Naive thymus-derived CD4-positive, alpha-beta T cell (primary cell): ENCODE measurements at regions of chr1 and their contacts with region 1.

Region 1: GRCh38 chr1:58816072-58816746 is 32.4 kb upstream of the JUN start:
- DNase-seq: peak; percentile 66 to 84 (median 71)
- ATAC-seq: peak; percentile 88
- H3K4me3 ChIP-seq: peak overlapping the region; percentile 89
- H3K4me3 Mint-ChIP-seq: peak overlapping the region; percentile 88 to 94 (median 92)
- H3K27ac ChIP-seq: peak overlapping the region; percentile 77
- H3K27ac Mint-ChIP-seq: peak overlapping the region; percentile 77 to 95 (median 90)
- H3K4me1 ChIP-seq: peaks cover 27 to 34% of the 10 kb centered on the region in 2 donors
- H3K4me1 Mint-ChIP-seq: peaks cover 19 to 49% (median 41%) of the 10 kb centered on the region in 7 donors
- H3K27me3 ChIP-seq: no peaks in the 10 kb centered on the region
- H3K27me3 Mint-ChIP-seq: peaks cover 0 to 5% (median 0%) of the 10 kb centered on the region in 5 donors

Region 2: DNA sequence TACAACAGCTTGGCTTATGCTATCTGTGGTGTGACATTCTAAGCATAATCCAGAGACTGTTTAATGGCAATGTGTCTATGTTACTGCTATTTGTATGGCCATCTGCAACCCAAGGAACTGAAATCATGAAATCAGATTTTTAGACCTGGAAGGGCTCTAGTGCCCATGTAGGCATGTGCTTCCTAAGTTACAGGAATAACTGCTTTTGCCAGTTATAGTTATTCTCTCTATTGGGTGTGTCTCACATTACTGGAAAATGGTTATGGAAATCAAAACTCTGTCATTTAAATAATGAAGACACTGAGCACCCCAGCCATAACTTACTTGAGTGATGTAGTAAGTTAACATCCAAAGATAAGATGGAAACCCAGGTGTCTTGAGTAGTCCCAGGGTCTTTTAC is 19.8 kb before region 1 on chr1:
- CTCF ChIA-PET with region 1: no interaction called
- POLR2A ChIA-PET with region 1: no interaction called
- intact Hi-C with region 1: no loop called
- DNase-seq: no peak
- ATAC-seq: no peak
- H3K4me3 ChIP-seq: no peak overlapping the region
- H3K4me3 Mint-ChIP-seq: no peak overlapping the region
- H3K27ac ChIP-seq: no peak overlapping the region
- H3K27ac Mint-ChIP-seq: no peak overlapping the region
- H3K4me1 ChIP-seq: no peaks in the 10 kb centered on the region
- H3K4me1 Mint-ChIP-seq: peaks cover 14 to 52% (median 29%) of the 10 kb centered on the region in 7 donors
- H3K27me3 ChIP-seq: no peaks in the 10 kb centered on the region
- H3K27me3 Mint-ChIP-seq: no peaks in the 10 kb centered on the region

Region 3: GRCh38 chr1:58857680-58858673 is 41.8 kb after region 1 on chr1:
- CTCF ChIA-PET with region 1: no interaction called
- POLR2A ChIA-PET with region 1: interaction called, 7 read pairs
- intact Hi-C with region 1: loop called (anchors 1 to 2 kb)
- DNase-seq: peak in 7 of 9 donors; percentile 28 to 61 (median 52)
- ATAC-seq: peak; percentile 76
- H3K4me3 ChIP-seq: no peak overlapping the region
- H3K4me3 Mint-ChIP-seq: peak overlapping the region in 9 of 10 donors; percentile 32 to 83 (median 51)
- H3K27ac ChIP-seq: peak overlapping the region; percentile 65
- H3K27ac Mint-ChIP-seq: peak overlapping the region; percentile 83 to 97 (median 92)
- H3K4me1 ChIP-seq: peaks cover 16 to 34% of the 10 kb centered on the region in 2 donors
- H3K4me1 Mint-ChIP-seq: peaks cover 34 to 64% (median 59%) of the 10 kb centered on the region in 7 donors
- H3K27me3 ChIP-seq: no peaks in the 10 kb centered on the region
- H3K27me3 Mint-ChIP-seq: no peaks in the 10 kb centered on the region

Region 4: GRCh38 chr1:59071289-59071688 is 255.1 kb after region 1 on chr1:
- CTCF ChIA-PET with region 1: no interaction called
- POLR2A ChIA-PET with region 1: interaction called, 4 read pairs
- intact Hi-C with region 1: loop called in 1 of 2 experiments (anchors 1 kb)
- DNase-seq: peak in 5 of 9 donors; percentile 12 to 30 (median 22)
- ATAC-seq: peak; percentile 38
- H3K4me3 ChIP-seq: peak overlapping the region; percentile 21
- H3K4me3 Mint-ChIP-seq: peak overlapping the region; percentile 51 to 84 (median 70)
- H3K27ac ChIP-seq: no peak overlapping the region
- H3K27ac Mint-ChIP-seq: peak overlapping the region; percentile 41 to 91 (median 79)
- H3K4me1 ChIP-seq: peaks cover 21 to 26% of the 10 kb centered on the region in 2 donors
- H3K4me1 Mint-ChIP-seq: peaks cover 21 to 32% (median 27%) of the 10 kb centered on the region in 7 donors
- H3K27me3 ChIP-seq: no peaks in the 10 kb centered on the region
- H3K27me3 Mint-ChIP-seq: no peaks in the 10 kb centered on the region